Activated B cell treated with CpG ODN at 0.5 μM for 24 hours (primary cell): ENCODE measurements at regions of chr5 and their contacts with region 1.

Region 1: DNA sequence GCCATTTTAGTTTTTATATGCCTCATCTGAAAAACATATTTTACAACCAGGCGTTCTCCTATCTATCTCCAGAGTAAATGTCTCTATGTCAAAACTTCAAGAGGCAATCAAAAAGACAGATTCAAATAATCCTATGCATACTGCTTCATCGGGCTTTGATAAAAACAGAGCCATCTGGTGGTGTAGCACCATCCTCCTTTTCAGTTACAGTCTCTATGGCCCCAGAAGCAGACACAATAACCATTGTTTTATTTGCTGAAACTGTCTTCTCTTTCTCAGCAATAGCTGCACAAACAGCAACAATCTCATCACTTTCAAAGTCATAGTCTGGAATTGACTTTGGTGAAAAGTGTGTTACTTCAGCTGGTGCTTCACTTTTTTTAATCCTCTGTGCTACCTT is 36.3 kb downstream of the PTGER4 start:
- DNase-seq: no peak
- ATAC-seq: no peak
- H3K4me3 Mint-ChIP-seq: no peak overlapping the region
- H3K27ac Mint-ChIP-seq: no peak overlapping the region
- H3K4me1 Mint-ChIP-seq: peaks cover 5% of the 10 kb centered on the region
- H3K27me3 Mint-ChIP-seq: no peaks in the 10 kb centered on the region
- CTCF ChIP-seq: no peak

Region 2: GRCh38 chr5:40743771-40744170 is 27.8 kb after region 1 on chr5:
- CTCF ChIA-PET with region 1: no interaction called
- POLR2A ChIA-PET with region 1: interaction called, 13 read pairs
- intact Hi-C with region 1: no loop called
- DNase-seq: no peak
- ATAC-seq: no peak
- H3K4me3 Mint-ChIP-seq: no peak overlapping the region
- H3K27ac Mint-ChIP-seq: no peak overlapping the region
- H3K4me1 Mint-ChIP-seq: peaks cover 16% of the 10 kb centered on the region
- H3K27me3 Mint-ChIP-seq: no peaks in the 10 kb centered on the region
- CTCF ChIP-seq: no peak